ENCODE measurements at regions of chr3 and their contacts with region 1.

Region 1: GRCh38 chr3:187361835-187362234 is 6.3 kb upstream of the RTP4 start:
- DNase-seq: no peak
- H3K4me3 Mint-ChIP-seq: no peak overlapping the region
- H3K27ac Mint-ChIP-seq: no peak overlapping the region
- H3K4me1 Mint-ChIP-seq: peaks cover 11% of the 10 kb centered on the region
- H3K27me3 Mint-ChIP-seq: peaks cover 3% of the 10 kb centered on the region

Region 2: GRCh38 chr3:186724911-186725310 is 636.9 kb before region 1 on chr3:
- intact Hi-C with region 1: loop called (anchors 5 kb)
- DNase-seq: no peak
- H3K4me3 Mint-ChIP-seq: no peak overlapping the region
- H3K27ac Mint-ChIP-seq: no peak overlapping the region
- H3K4me1 Mint-ChIP-seq: no peaks in the 10 kb centered on the region
- H3K27me3 Mint-ChIP-seq: peaks cover 8% of the 10 kb centered on the region

Region 3: DNA sequence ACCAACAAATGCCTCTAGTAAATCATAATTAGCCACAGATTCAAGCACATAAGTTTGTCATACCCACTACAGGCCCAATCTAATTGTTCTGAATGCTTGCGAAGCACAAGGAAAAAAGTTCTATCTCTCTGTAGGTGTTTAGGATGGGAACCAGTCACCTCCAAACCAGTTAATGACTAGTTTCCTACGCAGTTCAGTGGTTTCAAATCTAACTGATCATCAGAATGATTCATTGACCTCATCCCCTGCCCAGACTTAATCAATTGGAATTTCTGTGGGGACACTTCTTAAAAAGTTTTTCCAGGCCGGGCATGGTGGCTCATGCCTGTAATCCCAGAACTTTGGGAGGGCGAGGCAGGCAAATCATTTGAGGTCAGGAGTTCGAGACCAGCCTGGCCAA is 46.0 kb before region 1 on chr3:
- intact Hi-C with region 1: no loop called
- DNase-seq: no peak
- H3K4me3 Mint-ChIP-seq: no peak overlapping the region
- H3K27ac Mint-ChIP-seq: no peak overlapping the region
- H3K4me1 Mint-ChIP-seq: peaks cover 9% of the 10 kb centered on the region
- H3K27me3 Mint-ChIP-seq: peaks cover 22% of the 10 kb centered on the region

Measured in activated T-helper 1 cell treated with anti-CD3 and anti-CD28 coated beads, Interleukin-12 subunit alpha, Interleukin-12 subunit beta, Interleukin-2, Interleukin-4 antibody, amounts not matched to agents 30 ng/mL and 10 ng/mL and 1 ng/mL, durations not matched to agents 14 hours and 24 hours and 36 hours (primary cell).